Ascending aorta (tissue), 2 donors: ENCODE measurements at regions of chr17 and their contacts with region 1.

Region 1: GRCh38 chr17:16521070-16521727 is 29.2 kb upstream of the LRRC75A start:
- DNase-seq: peak in 1 of 2 donors; percentile 87
- H3K4me3 ChIP-seq: no peak overlapping the region
- H3K27ac ChIP-seq: no peak overlapping the region
- H3K4me1 ChIP-seq: peaks cover 0 to 8% of the 10 kb centered on the region in 2 donors
- H3K27me3 ChIP-seq: no peaks in the 10 kb centered on the region
- CTCF ChIP-seq: peak; percentile 88 to 90 (median 89)

Region 2: DNA sequence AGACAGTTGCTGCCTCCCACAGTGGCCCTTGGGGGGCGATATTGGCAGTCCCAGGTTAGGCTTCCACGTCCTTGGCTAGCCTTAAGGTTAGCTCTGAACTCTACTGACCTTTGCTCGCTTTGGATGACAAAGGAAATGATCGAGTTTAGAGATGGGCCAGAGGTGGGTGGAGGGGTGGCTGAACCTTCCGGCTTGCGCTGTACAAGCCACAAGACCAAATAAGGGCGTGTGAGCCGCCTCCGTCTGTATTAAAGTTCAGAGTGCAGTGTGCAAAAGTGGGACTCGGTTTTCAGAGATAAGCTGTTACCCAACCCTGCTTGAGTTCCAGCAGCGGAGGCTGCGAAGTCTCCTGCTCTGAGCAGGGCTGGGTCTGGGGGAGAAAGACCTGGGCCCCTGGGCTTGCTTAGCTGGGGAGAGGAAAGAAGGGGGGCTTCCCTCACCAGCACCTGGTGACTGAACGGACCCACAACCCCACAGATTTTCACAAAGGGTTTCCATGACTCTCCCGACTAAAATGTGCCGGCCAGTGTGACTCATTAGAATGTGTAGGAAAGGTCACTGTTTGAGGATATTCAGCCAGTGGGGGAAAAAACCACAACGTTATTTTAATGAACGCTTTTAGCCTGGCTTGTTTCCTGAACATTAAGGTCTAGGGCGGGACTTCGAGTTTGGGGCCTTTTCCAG is 235.1 kb before region 1 on chr17:
- intact Hi-C with region 1: loop called (anchors 10 kb)
- DNase-seq: peak; percentile 73 to 93
- H3K4me3 ChIP-seq: peak overlapping the region; percentile 39 to 48
- H3K27ac ChIP-seq: peak overlapping the region; percentile 98 to 100
- H3K4me1 ChIP-seq: peaks cover 18 to 41% of the 10 kb centered on the region in 2 donors
- H3K27me3 ChIP-seq: no peaks in the 10 kb centered on the region
- CTCF ChIP-seq: peak in 2 of 3 experiments; percentile 32 to 41

Region 3: GRCh38 chr17:16304830-16305229 is 216.4 kb before region 1 on chr17:
- intact Hi-C with region 1: no loop called
- DNase-seq: no peak
- H3K4me3 ChIP-seq: no peak overlapping the region
- H3K27ac ChIP-seq: no peak overlapping the region
- H3K4me1 ChIP-seq: peaks cover 0 to 2% of the 10 kb centered on the region in 2 donors
- H3K27me3 ChIP-seq: no peaks in the 10 kb centered on the region
- CTCF ChIP-seq: peak in 1 of 3 experiments; percentile 18

Region 4: GRCh38 chr17:16363749-16364536 is 157.3 kb before region 1 on chr17:
- intact Hi-C with region 1: loop called (anchors 2 kb)
- DNase-seq: peak in 1 of 2 donors; percentile 90
- H3K4me3 ChIP-seq: no peak overlapping the region
- H3K27ac ChIP-seq: peak overlapping the region; percentile 51 to 60
- H3K4me1 ChIP-seq: no peaks in the 10 kb centered on the region
- H3K27me3 ChIP-seq: no peaks in the 10 kb centered on the region
- CTCF ChIP-seq: peak; percentile 79 to 94 (median 90)

Region 5: DNA sequence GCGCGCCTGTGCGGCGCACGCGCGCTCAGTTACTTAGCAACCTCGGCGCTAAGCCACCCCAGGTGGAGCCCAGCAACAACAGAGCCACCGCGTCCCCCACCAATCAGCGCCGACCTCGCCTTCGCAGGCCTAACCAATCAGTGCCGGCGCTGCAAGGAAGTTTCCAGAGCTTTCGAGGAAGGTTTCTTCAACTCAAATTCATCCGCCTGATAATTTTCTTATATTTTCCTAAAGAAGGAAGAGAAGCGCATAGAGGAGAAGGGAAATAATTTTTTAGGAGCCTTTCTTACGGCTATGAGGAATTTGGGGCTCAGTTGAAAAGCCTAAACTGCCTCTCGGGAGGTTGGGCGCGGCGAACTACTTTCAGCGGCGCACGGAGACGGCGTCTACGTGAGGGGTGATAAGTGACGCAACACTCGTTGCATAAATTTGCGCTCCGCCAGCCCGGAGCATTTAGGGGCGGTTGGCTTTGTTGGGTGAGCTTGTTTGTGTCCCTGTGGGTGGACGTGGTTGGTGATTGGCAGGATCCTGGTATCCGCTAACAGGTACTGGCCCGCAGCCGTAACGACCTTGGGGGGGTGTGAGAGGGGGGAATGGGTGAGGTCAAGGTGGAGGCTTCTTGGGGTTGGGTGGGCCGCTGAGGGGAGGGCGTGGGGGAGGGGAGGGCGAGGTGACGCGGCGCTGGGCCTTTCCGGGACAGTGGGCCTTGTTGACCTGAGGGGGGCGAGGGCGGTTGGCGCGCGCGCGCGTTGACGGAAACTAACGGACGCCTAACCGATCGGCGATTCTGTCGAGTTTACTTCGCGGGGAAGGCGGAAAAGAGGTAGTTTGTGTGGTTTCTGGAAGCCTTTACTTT is 140.3 kb before region 1 on chr17 and contains the start of gene UBB:
- intact Hi-C with region 1: loop called (anchors 5 kb)
- DNase-seq: peak; percentile 92 to 97
- H3K4me3 ChIP-seq: peak within 1 kb of the TSS; percentile 82 to 83
- H3K27ac ChIP-seq: peak within 1 kb of the TSS; percentile 90 to 94
- H3K4me1 ChIP-seq: peaks cover 8 to 15% of the 10 kb centered on the region in 2 donors
- H3K27me3 ChIP-seq: no peaks in the 10 kb centered on the region
- CTCF ChIP-seq: no peak
- total RNA-seq, gene UBB: 615 TPM

Region 6: DNA sequence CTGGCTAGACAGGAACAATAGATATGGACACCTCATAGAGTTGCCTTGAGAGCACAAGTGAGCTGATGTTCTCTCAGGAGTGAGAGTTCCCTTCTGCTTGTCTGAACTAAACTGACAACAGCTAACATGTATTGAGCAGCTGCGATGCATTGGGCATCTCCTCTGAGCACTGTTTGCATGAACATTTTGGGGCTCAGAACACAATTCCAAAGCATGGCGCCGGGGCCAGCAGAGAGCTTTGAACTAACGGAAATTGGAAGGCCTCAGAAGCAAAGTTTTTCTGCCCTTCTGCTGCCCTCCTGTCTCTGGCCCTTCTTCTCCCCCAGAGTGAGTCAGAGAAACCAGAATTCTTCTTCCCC is 67.7 kb before region 1 on chr17:
- intact Hi-C with region 1: loop called (anchors 1 kb)
- DNase-seq: no peak
- H3K4me3 ChIP-seq: no peak overlapping the region
- H3K27ac ChIP-seq: no peak overlapping the region
- H3K4me1 ChIP-seq: no peaks in the 10 kb centered on the region
- H3K27me3 ChIP-seq: no peaks in the 10 kb centered on the region
- CTCF ChIP-seq: no peak

Region 7: GRCh38 chr17:16463358-16464302 is 57.6 kb before region 1 on chr17:
- intact Hi-C with region 1: loop called (anchors 2 kb)
- DNase-seq: peak in 1 of 2 donors; percentile 75
- H3K4me3 ChIP-seq: no peak overlapping the region
- H3K27ac ChIP-seq: no peak overlapping the region
- H3K4me1 ChIP-seq: peaks cover 0 to 6% of the 10 kb centered on the region in 2 donors
- H3K27me3 ChIP-seq: no peaks in the 10 kb centered on the region
- CTCF ChIP-seq: peak; percentile 3 to 29 (median 28)

Region 8: GRCh38 chr17:16486373-16487250 is 34.6 kb before region 1 on chr17:
- intact Hi-C with region 1: loop called (anchors 2 kb)
- DNase-seq: peak; percentile 21 to 83
- H3K4me3 ChIP-seq: peak overlapping the region; percentile 39 to 43
- H3K27ac ChIP-seq: peak overlapping the region; percentile 69 to 74
- H3K4me1 ChIP-seq: peaks cover 0 to 43% of the 10 kb centered on the region in 2 donors
- H3K27me3 ChIP-seq: no peaks in the 10 kb centered on the region
- CTCF ChIP-seq: no peak